ENCODE measurements at regions of chr9 and their contacts with region 1.

Region 1: DNA sequence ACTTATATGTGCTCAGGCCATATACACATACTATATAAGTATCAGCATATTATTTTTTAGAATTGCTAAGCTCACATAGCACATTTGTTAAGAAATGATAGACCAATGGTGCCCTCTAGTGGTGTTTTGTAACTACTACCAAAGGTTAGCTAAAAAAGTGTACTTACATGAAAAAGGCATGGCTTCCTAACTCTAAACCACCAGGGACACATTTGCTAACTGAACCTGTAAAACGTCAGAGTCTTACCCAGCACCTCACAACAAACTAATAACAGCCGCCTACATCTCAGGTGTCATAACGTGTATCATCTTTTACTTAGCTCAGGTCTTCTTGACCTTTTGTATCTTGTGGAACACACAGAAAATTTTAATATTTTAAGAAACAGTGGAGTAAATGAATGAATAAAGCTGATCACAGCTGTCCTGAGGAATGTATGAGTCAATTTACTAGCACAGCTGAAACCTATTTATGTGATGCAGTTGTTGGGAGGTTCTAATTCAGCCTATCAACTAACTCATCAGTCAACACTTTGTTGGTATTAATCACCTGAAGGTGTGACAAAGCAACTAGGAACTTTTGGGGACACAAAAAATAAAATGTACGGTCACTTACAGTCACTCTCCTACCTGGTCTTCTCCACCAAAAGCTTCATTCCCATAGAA is 72.9 kb downstream of the BAAT start:
- DNase-seq: no peak
- H3K4me3 Mint-ChIP-seq: no peak overlapping the region
- H3K27ac Mint-ChIP-seq: no peak overlapping the region
- H3K4me1 Mint-ChIP-seq: no peaks in the 10 kb centered on the region
- H3K27me3 Mint-ChIP-seq: peaks cover 6% of the 10 kb centered on the region

Region 2: GRCh38 chr9:100700689-100701318 is 611.1 kb before region 1 on chr9:
- CTCF ChIA-PET with region 1: interaction called, 13 read pairs
- intact Hi-C with region 1: loop called (anchors 1 kb)
- DNase-seq: peak; percentile 9
- H3K4me3 Mint-ChIP-seq: no peak overlapping the region
- H3K27ac Mint-ChIP-seq: no peak overlapping the region
- H3K4me1 Mint-ChIP-seq: no peaks in the 10 kb centered on the region
- H3K27me3 Mint-ChIP-seq: no peaks in the 10 kb centered on the region

Region 3: GRCh38 chr9:100714372-100715099 is 597.4 kb before region 1 on chr9:
- CTCF ChIA-PET with region 1: interaction called, 16 read pairs
- intact Hi-C with region 1: loop called (anchors 1 kb)
- DNase-seq: peak; percentile 71
- H3K4me3 Mint-ChIP-seq: no peak overlapping the region
- H3K27ac Mint-ChIP-seq: no peak overlapping the region
- H3K4me1 Mint-ChIP-seq: no peaks in the 10 kb centered on the region
- H3K27me3 Mint-ChIP-seq: peaks cover 7% of the 10 kb centered on the region

Region 4: DNA sequence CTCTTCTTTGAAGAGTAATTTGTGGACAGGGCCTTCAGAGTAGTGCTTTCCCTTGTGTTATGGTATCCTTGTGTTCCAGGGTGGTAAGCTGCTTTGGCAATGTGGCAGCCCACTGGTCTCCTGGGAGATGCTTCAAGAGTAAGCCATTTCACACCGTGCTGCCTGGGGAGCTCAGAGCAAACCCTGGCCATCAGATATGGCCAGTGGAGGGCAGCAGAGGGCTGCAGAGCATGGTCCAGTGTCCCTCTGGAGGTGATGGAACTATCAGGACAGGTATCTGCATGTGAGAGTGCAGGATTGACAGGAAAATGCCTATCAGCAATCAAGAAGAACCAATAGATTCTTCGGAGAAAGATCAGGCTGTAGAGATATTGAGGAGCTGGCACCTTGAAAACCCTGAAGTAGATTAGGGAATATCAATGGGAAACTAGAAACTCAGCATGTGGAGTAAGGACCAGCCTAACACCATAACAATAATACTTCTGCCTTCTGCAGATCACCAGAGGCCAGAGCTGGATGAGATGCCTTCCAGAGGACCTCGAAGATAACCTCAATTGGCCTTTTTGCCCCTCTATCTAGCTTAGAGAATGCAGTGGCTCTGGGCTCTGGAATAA is 192.6 kb before region 1 on chr9:
- CTCF ChIA-PET with region 1: interaction called, 9 read pairs
- intact Hi-C with region 1: loop called (anchors 2 kb)
- DNase-seq: peak; percentile 42
- H3K4me3 Mint-ChIP-seq: no peak overlapping the region
- H3K27ac Mint-ChIP-seq: no peak overlapping the region
- H3K4me1 Mint-ChIP-seq: no peaks in the 10 kb centered on the region
- H3K27me3 Mint-ChIP-seq: no peaks in the 10 kb centered on the region

Region 5: DNA sequence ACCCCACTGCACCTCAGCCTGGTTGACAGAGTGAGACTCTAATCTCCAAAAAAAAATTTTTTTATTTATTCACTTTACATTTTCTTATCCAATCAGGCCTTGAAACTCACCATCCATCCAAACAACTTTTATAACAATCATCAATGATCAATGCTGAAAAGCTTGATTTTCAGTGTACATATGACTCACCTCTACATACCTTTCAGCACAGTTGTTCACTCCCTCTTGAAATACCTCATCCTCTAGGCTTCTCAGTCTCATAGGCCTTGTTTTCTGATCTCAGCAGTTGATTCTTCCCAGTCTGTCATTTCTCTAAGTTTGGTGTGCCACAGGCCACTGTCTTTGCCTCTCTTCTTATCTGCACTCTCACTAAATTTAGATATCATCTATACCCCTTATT is 390.4 kb after region 1 on chr9:
- CTCF ChIA-PET with region 1: no interaction called
- intact Hi-C with region 1: no loop called
- DNase-seq: no peak
- H3K4me3 Mint-ChIP-seq: no peak overlapping the region
- H3K27ac Mint-ChIP-seq: no peak overlapping the region
- H3K4me1 Mint-ChIP-seq: peaks cover 7% of the 10 kb centered on the region
- H3K27me3 Mint-ChIP-seq: peaks cover 3% of the 10 kb centered on the region

Measured in activated naive CD4-positive, alpha-beta T cell treated with anti-CD3 and anti-CD28 coated beads for 36 hours (primary cell).